Activated CD4-positive, alpha-beta T cell treated with anti-CD3 and anti-CD28 coated beads, Interleukin-2, amount 10 ng/mL, durations not matched to agents 24 days and 14 days (primary cell): ENCODE measurements at regions of chr2 and their contacts with region 1.

Region 1: GRCh38 chr2:102251042-102251848 is 60.1 kb upstream of the IL1RL1 start:
- DNase-seq: peak; percentile 87
- H3K4me3 Mint-ChIP-seq: peak overlapping the region; percentile 84
- H3K27ac Mint-ChIP-seq: peak overlapping the region; percentile 87
- H3K4me1 Mint-ChIP-seq: peaks cover 33% of the 10 kb centered on the region
- H3K27me3 Mint-ChIP-seq: peaks cover 2% of the 10 kb centered on the region

Region 2: DNA sequence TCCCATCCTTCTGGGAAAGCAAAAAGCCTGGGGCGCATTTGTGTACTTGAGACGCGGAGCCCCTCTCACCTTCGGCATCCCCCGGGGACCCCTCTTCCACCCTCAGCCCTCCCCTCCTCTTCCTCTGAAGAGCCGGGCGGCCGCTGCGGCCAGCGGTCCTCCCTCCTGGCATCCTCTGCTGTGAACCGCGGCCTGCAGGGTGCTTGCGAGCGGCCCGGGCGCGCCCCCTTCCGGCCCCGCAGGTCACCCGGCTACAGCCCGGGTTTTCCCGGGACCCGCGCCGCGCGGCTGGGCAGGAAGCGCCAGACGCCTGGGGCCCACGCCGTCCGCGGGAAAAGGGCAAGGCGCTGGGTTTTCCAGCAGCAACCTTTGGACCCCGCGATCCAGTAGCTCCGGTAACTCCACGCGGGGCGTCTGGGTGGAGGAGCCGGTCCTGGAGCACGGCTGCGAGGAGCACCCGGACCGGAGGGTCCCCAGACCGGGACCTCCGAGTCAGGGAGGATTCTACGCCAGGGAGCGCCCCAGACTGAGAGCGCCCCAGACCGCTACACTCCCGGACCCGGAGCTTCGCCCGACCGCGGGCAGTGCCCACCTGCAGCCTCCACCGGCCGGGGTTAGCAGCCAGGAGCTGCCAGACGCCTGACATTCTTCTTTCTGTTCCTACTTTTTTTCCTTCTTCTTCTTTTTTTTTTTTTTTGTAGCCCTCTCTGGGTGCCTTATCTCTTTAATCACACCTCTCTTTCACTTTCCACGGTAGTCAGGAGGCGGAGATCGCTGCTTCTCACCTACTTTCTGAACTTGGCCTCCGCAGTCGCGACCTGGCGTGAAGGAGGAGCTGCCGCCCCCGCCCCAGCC is 104.5 kb after region 1 on chr2 and contains the start of gene IL18R1:
- intact Hi-C with region 1: loop called (anchors 1 kb)
- DNase-seq: peak; percentile 92
- H3K4me3 Mint-ChIP-seq: peak within 1 kb of the TSS; percentile 99
- H3K27ac Mint-ChIP-seq: peak within 1 kb of the TSS; percentile 99
- H3K4me1 Mint-ChIP-seq: peaks cover 39% of the 10 kb centered on the region
- H3K27me3 Mint-ChIP-seq: no peaks in the 10 kb centered on the region
- total RNA-seq, gene IL18R1: 41.7 and 50.2 TPM in 2 replicates